Activated B cell treated with CpG ODN at 0.5 μM for 24 hours (primary cell): ENCODE measurements at regions of chr10 and their contacts with region 1.

Region 1: DNA sequence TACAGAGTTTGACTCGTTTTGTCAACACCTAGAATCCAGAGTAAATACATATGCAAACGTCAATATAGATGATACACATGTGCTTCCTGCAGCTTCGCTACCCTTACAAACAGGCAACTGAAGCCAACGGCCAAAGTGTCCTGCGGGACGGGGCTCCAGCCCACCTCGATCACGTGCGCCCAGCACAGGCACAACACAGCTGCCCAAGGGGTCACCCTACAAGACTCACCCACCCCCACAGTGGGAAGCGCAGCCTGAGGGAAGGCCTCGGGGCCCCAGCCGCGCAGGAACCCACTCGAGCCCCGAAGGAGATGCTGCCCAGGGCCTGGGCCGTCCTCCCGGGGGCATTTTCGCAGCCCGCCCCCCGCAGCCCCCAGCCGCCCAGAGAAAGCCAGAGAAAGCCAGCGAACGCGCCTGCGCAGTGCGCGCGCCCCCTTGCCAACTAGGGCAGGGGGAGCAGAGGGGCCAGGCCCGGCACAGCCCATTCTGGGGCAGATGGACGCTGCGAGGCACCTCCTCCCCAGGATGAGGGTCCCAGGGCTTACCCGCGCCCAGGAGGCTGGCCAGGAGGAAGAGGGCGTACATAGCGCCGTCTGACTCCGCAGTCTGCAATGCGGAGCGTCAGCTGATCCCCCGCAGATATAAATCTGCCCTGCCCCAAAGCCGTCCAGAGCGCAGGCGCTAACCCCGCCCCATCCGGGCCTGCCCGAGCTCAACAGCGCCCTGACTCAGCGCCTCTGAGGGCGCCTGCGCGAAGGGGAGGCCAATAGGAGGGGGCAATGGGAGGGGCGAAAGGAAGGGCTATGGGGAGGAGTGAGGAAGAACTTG is at the start of gene PSAP:
- DNase-seq: peak; percentile 96
- ATAC-seq: peak; percentile 97
- H3K4me3 Mint-ChIP-seq: peak within 1 kb of the TSS; percentile 92
- H3K27ac Mint-ChIP-seq: peak within 1 kb of the TSS; percentile 83
- H3K4me1 Mint-ChIP-seq: peaks cover 63% of the 10 kb centered on the region
- H3K27me3 Mint-ChIP-seq: no peaks in the 10 kb centered on the region
- CTCF ChIP-seq: no peak
- total RNA-seq, gene PSAP: 207 and 210 TPM in 2 replicates

Region 2: DNA sequence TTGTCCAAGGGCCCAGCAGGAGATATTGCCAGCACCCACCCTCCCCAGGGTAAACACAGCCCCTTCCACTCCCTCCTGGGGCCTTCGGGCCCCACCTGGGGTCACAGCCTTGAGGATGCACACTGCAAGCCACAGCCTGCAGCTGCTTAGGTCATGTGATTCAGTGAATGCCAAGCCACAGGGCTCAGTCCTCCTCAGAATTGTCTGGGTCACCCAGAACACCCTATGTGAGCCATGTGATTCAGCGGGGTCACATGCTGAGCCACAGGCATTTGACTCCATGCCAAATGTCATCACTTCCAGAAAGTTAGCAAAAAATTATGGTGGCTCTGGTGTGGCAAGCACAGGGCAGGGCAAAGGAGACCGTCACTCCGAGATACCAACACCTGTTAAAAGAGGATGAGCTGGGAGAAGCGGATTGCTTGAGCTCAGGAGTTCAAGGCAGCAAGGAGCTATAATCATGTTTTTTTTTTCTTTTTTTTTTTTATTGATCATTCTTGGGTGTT is 17.4 kb after region 1 on chr10:
- CTCF ChIA-PET with region 1: no interaction called
- POLR2A ChIA-PET with region 1: interaction called, 16 read pairs
- intact Hi-C with region 1: loop called (anchors 1 kb)
- DNase-seq: no peak
- ATAC-seq: peak; percentile 10
- H3K4me3 Mint-ChIP-seq: no peak overlapping the region
- H3K27ac Mint-ChIP-seq: no peak overlapping the region
- H3K4me1 Mint-ChIP-seq: peaks cover 19% of the 10 kb centered on the region
- H3K27me3 Mint-ChIP-seq: no peaks in the 10 kb centered on the region
- CTCF ChIP-seq: no peak

Region 3: DNA sequence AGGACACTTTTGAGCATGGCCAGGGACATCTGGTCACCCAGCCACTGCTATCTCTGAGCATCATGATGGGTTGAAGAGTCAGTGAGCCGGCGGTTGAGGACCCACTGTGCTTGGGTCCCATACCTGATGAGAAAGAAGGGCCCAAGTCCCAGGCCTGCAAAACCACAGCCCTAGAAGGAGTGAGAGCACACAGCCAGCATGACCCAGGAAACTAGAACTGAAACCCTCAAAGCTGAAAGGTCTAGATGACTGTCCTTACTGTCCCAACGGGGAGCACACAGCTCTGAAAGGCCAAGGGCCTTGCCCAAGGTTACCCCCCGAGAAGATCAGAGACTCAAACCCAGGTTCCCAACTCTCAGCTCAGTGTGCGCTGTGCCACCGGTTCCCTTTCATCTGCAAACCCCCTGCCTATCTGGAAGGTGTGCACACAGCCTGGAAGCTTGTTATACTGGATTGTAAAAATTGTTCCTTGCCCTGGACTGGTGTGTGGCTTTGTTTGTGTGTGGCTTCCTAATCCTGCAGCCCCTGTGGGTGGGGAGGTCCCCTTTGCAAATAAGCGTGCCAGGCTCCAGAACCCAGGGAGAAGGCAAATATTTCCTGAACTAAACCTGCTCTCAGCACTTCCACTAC is 22.8 kb after region 1 on chr10:
- CTCF ChIA-PET with region 1: no interaction called
- POLR2A ChIA-PET with region 1: interaction called, 16 read pairs
- intact Hi-C with region 1: loop called (anchors 1 kb)
- DNase-seq: no peak
- ATAC-seq: peak; percentile 78
- H3K4me3 Mint-ChIP-seq: peak overlapping the region; percentile 58
- H3K27ac Mint-ChIP-seq: peak overlapping the region; percentile 61
- H3K4me1 Mint-ChIP-seq: peaks cover 46% of the 10 kb centered on the region
- H3K27me3 Mint-ChIP-seq: no peaks in the 10 kb centered on the region
- CTCF ChIP-seq: no peak

Region 4: DNA sequence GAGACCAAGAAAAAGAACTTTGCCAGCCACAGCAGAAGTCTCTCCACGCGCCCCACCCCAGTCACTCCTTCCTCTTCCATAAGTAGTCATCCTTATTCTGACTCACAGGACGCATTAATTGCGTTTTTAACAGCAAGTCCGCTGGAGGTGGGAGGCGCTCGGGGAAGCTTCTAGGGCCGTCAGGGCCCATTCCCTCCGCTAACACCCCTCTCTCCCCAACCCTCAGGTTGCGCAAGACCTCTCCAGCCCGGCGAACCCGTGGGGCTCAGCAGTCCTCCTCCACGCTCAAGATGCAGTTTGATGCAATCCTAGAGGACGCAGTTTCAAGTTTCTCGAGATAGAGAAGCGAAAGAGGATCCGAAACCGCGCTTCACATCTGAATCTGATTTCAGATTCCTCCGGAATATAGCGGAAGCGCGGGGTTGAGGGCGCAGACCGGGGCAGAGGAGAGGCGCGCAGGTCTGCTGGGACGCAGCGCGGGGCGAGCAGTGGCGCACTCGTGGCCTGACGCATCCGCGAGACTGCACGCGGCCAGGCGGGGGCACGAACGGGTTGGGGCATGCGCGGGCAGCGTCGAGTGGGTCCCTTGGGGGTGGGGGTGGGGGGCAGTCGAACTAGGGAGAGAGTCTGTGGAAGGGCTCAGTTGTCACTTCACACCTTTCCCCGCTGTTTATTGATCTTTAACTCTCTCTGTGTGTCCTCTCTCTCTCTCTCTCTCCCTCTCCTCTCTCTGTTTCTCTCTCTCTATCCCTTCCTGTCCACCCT is 38.0 kb after region 1 on chr10:
- CTCF ChIA-PET with region 1: interaction called, 3 read pairs
- POLR2A ChIA-PET with region 1: interaction called, 9 read pairs
- intact Hi-C with region 1: loop called (anchors 1 kb)
- DNase-seq: peak; percentile 82
- ATAC-seq: peak; percentile 94
- H3K4me3 Mint-ChIP-seq: peak overlapping the region; percentile 87
- H3K27ac Mint-ChIP-seq: peak overlapping the region; percentile 92
- H3K4me1 Mint-ChIP-seq: peaks cover 39% of the 10 kb centered on the region
- H3K27me3 Mint-ChIP-seq: no peaks in the 10 kb centered on the region
- CTCF ChIP-seq: no peak

Region 5: DNA sequence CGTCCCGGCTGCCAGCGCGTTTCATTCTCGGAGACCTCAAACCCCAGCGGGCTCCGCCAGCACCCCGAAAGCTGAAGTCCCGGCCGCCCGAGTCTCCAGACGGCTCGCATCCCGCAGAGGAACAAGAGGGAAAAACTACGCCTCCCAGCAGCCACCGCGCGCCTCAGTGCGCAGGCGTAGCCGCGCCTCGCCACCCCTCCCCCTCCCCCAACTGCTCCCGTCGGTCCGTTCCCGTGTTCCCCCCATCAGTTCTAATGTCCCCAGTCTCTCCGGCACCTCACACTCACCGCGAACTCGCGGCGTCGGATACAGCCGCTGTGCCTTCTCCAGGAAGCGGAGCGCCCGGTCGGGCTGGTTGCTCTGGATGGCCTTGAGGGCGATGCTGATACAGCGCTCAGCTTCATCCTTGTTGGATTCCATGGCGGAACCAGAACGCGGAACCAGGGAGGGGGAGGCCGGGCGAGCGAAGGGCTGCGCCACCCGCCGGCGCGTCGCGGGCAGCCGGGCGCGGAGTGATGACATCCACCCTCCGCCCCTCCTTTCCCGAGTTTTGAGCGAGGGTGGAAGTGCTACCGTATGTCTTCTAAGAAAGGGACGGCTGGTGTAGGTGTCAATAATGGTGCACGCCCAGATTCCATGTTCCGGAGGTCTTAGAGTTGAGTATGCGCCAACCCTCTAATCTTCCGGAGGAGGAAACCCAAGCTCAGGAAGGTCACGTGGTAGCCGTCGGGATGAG is 503.8 kb after region 1 on chr10 and contains the start of gene DNAJB12:
- CTCF ChIA-PET with region 1: no interaction called
- POLR2A ChIA-PET with region 1: no interaction called
- intact Hi-C with region 1: loop called (anchors 1 kb)
- DNase-seq: peak; percentile 89
- ATAC-seq: peak; percentile 84
- H3K4me3 Mint-ChIP-seq: peak within 1 kb of the TSS; percentile 99
- H3K27ac Mint-ChIP-seq: peak within 1 kb of the TSS; percentile 99
- H3K4me1 Mint-ChIP-seq: peaks cover 35% of the 10 kb centered on the region
- H3K27me3 Mint-ChIP-seq: no peaks in the 10 kb centered on the region
- CTCF ChIP-seq: no peak
- total RNA-seq, gene DNAJB12: 39.0 and 39.9 TPM in 2 replicates